Dendritic cell treated with granulocyte-macrophage colony-stimulating factor and Interleukin-4, amounts not matched to agents 40 ng/mL and 50 ng/mL, for 4 days (primary cell): ENCODE measurements at regions of chr7 and their contacts with region 1.

Region 1: GRCh38 chr7:107879400-107880035 is 11.5 kb upstream of the DLD start:
- H3K4me3 Mint-ChIP-seq: no peak overlapping the region
- H3K27ac Mint-ChIP-seq: no peak overlapping the region
- H3K4me1 Mint-ChIP-seq: peaks cover 9% of the 10 kb centered on the region
- H3K27me3 Mint-ChIP-seq: peaks cover 10% of the 10 kb centered on the region

Region 2: DNA sequence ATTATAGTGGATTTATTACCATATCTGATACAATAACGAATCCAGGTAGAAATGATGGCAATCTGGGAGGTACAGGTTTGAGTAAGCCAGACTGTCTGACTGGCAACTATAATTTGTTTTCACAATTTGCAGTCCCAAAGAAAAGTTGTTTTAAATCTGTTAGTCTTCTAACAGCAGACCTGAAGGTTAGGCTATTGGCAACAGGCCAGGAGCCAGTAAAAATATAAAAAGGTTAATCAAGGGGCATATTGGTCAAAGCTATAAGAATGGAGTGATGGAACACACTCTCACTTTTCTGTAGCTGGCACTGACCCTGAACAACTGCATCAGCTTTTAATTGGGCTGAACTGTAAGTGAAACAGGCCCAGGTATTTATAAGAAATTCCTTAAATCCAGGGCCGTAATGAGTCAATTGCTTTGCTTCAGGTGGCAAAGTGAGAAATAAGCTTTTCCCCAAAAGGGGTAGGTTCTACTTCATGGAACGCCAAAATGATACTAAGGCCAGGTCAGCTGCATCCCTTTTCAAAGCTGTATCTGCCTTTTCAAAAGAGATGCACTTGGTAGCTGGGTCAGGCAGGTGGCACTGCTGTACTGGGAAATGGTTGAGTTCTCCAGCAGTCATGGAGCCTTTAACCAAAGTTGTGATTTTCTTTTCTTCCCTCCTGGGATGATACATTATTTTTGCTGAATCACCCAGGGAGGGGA is 416.6 kb before region 1 on chr7:
- intact Hi-C with region 1: loop called (anchors 5 kb)
- H3K4me3 Mint-ChIP-seq: no peak overlapping the region
- H3K27ac Mint-ChIP-seq: no peak overlapping the region
- H3K4me1 Mint-ChIP-seq: no peaks in the 10 kb centered on the region
- H3K27me3 Mint-ChIP-seq: no peaks in the 10 kb centered on the region

Region 3: DNA sequence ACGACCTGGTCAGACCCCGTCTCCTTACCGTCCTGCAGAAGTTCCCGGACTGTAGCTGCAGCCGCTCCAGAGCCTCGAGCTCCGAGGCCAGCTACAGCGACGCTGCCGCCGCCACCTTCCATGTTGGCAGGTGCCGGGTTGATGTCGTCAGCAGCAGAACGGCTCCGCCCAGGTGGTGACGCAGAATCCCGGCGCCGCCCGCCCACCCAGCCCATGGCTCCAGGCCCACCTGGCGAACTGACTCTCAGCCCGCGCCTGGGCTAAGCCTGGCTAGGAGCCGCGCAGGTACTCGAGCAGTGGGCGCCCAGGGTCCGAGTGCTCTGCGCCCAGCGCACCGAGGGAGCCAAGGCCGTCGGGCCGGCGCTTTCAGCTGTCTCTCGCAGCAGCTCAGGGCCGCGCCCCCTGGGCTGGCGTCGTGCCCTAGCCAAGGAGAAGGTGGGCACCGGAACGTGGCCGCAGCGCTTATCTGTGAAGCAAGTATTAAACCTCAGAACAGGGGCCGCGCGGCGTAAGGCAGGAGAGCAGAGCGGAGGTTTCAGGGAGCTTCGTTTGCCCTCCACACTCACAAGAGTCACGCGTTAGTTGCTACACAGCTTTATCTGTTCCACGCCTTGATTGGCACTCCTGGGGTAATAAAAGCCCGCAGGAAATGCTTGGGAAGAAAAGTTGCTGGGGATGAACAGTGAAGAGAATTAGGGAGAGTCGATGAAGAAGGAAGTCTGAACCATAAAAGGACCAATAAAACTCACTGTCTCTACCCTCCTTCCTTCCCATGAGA is 315.6 kb before region 1 on chr7 and contains the starts of genes COG5 and DUS4L:
- intact Hi-C with region 1: loop called (anchors 10 kb)
- H3K4me3 Mint-ChIP-seq: peak within 1 kb of the TSS; percentile 93
- H3K27ac Mint-ChIP-seq: peak within 1 kb of the TSS; percentile 93
- H3K4me1 Mint-ChIP-seq: peaks cover 56% of the 10 kb centered on the region
- H3K27me3 Mint-ChIP-seq: no peaks in the 10 kb centered on the region

Region 4: GRCh38 chr7:107743567-107744344 is 135.8 kb before region 1 on chr7 and contains the start of gene CBLL1:
- intact Hi-C with region 1: loop called (anchors 1 kb)
- H3K4me3 Mint-ChIP-seq: peak within 1 kb of the TSS; percentile 97
- H3K27ac Mint-ChIP-seq: peak within 1 kb of the TSS; percentile 99
- H3K4me1 Mint-ChIP-seq: peaks cover 22% of the 10 kb centered on the region
- H3K27me3 Mint-ChIP-seq: no peaks in the 10 kb centered on the region